A673 (cell line): ENCODE measurements at regions of chr9 and their contacts with region 1.

Region 1: DNA sequence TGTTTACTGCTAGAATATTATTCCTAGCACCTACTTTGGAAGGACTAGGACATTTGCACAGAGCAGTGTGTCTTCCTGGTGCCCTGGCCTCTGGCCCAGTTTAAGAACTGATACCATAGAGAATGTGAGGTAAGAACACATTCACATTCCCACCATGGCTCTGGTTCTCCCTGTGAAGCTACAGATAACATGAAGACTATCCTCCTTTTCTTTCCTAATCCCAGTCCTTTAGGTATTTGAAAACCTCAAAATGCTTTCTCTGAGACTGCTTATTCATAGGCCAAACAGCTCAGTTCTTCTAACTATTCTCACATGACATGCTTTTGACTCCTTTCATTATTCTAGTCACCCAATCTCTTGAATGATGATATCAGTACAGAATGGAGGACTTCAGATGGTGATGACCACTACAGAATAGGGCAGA is 11.9 kb downstream of the FAM219A start:
- DNase-seq: no peak
- H3K4me3 ChIP-seq: no peak overlapping the region
- H3K27ac ChIP-seq: no peak overlapping the region
- H3K4me1 ChIP-seq: peaks cover 38% of the 10 kb centered on the region
- H3K27me3 ChIP-seq: no peaks in the 10 kb centered on the region
- CTCF ChIP-seq: no peak

Region 2: DNA sequence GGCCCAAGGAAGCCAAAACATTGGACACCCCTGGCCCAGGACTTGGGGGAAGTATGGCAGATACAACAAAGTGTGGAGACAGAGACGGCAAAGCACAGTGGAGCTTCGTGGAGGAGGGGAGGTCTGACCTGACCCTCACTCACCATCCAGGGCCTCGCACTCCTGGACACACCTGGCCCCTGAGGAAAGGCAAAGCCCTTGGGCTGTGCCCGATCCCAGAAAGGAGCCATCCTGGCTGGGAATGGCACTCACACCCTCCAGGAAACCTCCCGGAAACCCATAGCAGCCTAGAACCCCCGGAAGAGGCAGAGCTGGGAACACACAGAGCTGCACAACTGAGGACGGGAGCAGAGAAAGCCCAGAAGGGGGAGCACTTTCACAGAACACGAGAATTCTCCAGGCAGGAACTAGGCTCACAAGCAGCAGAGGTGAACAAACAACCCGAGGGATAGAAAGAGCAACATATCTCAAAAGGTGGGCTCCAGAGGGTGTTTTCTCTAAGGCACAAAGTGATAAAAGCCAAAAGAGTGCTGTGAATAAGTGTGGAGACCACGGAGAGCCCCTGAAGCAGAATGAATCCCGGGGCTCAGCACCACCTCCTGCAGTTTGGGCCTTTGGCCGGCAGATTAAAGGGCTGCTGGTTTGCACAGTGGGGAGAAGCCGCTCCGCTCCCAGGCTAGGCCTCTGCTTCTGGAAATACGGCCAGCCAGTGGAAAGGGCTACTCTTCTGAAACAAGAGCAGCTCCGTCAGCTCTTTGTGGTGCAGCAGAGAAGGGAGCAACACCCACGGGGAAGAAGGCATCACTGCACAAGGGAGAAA is 521.3 kb before region 1 on chr9:
- CTCF ChIA-PET with region 1: no interaction called
- POLR2A ChIA-PET with region 1: no interaction called
- intact Hi-C with region 1: no loop called
- DNase-seq: peak; percentile 68
- H3K4me3 ChIP-seq: no peak overlapping the region
- H3K27ac ChIP-seq: no peak overlapping the region
- H3K4me1 ChIP-seq: no peaks in the 10 kb centered on the region
- H3K27me3 ChIP-seq: no peaks in the 10 kb centered on the region
- CTCF ChIP-seq: peak; percentile 81

Region 3: GRCh38 chr9:34479431-34479866 is 33.0 kb after region 1 on chr9:
- CTCF ChIA-PET with region 1: no interaction called
- POLR2A ChIA-PET with region 1: interaction called, 4 read pairs
- intact Hi-C with region 1: loop called (anchors 2 kb)
- DNase-seq: no peak
- H3K4me3 ChIP-seq: no peak overlapping the region
- H3K27ac ChIP-seq: no peak overlapping the region
- H3K4me1 ChIP-seq: no peaks in the 10 kb centered on the region
- H3K27me3 ChIP-seq: no peaks in the 10 kb centered on the region
- CTCF ChIP-seq: no peak